K562 (cell line): ENCODE measurements at regions of chr12 and their contacts with region 1.

Region 1: GRCh38 chr12:69585189-69586062 is at the start of gene CCT2:
- DNase-seq: peak; percentile 94 to 98 (median 96)
- ATAC-seq: peak; percentile 96
- H3K4me3 ChIP-seq: peak within 1 kb of the TSS; percentile 70
- H3K27ac ChIP-seq: peak within 1 kb of the TSS; percentile 81
- H3K4me1 ChIP-seq: peaks cover 2 to 4% of the 10 kb centered on the region in 2 experiments; a peak in 2 of 5 replicates
- H3K27me3 ChIP-seq: no peaks in the 10 kb centered on the region
- CTCF ChIP-seq: peak; percentile 38 to 60 (median 49); a peak in 5 of 6 replicates
- EP300 ChIP-seq: peak; percentile 35; the same call in 1 of the 2 replicates
- POLR2A ChIP-seq: peak; percentile 99
- RAD21 ChIP-seq: 0 out of 4 replicates have a peak, but pooled peaks of 1 of the 2 experiments have one; percentile 37
- polyA plus RNA-seq, gene CCT2: 542 to 680 TPM

Region 2: GRCh38 chr12:69359531-69360347 is 225.7 kb before region 1 on chr12 and contains the start of gene YEATS4:
- CTCF ChIA-PET with region 1: no interaction called
- POLR2A ChIA-PET with region 1: interaction called, 3 read pairs
- in situ Hi-C with region 1: no loop called
- intact Hi-C with region 1: loop called (anchors 1 kb)
- DNase-seq: peak; percentile 86 to 95 (median 90)
- ATAC-seq: peak; percentile 94
- H3K4me3 ChIP-seq: peak within 1 kb of the TSS; percentile 52
- H3K27ac ChIP-seq: peak within 1 kb of the TSS; percentile 95
- H3K4me1 ChIP-seq: peaks cover 11 to 14% of the 10 kb centered on the region in 2 experiments; a peak in 4 of 5 replicates
- H3K27me3 ChIP-seq: no peaks in the 10 kb centered on the region
- CTCF ChIP-seq: no peak
- EP300 ChIP-seq: peak; percentile 34; the same call in 1 of the 2 replicates
- POLR2A ChIP-seq: peak; percentile 95
- RAD21 ChIP-seq: no peak
- polyA plus RNA-seq, gene YEATS4: 25.9 to 26.3 TPM

Region 3: GRCh38 chr12:69623970-69624369 is 38.5 kb after region 1 on chr12:
- CTCF ChIA-PET with region 1: no interaction called
- POLR2A ChIA-PET with region 1: interaction called, 3 read pairs
- in situ Hi-C with region 1: no loop called
- intact Hi-C with region 1: loop called (anchors 5 kb)
- DNase-seq: peak; percentile 71 to 99 (median 82)
- ATAC-seq: peak; percentile 96
- H3K4me3 ChIP-seq: no peak overlapping the region
- H3K27ac ChIP-seq: peak overlapping the region; percentile 52
- H3K4me1 ChIP-seq: peaks cover 16 to 18% of the 10 kb centered on the region in 2 experiments
- H3K27me3 ChIP-seq: 0 out of 5 replicates have a peak, but pooled peaks cover 0 to 6% of the 10 kb centered on the region in 2 experiments
- CTCF ChIP-seq: no peak
- EP300 ChIP-seq: peak; percentile 95
- POLR2A ChIP-seq: no peak
- RAD21 ChIP-seq: peak in 1 of 2 experiments; percentile 12; a peak in 2 of 4 replicates

Region 4: GRCh38 chr12:69639400-69640016 is 54.1 kb after region 1 on chr12:
- CTCF ChIA-PET with region 1: no interaction called
- POLR2A ChIA-PET with region 1: no interaction called
- in situ Hi-C with region 1: no loop called
- intact Hi-C with region 1: loop called (anchors 1 kb)
- DNase-seq: peak; percentile 78 to 88 (median 82)
- ATAC-seq: peak; percentile 95
- H3K4me3 ChIP-seq: no peak overlapping the region
- H3K27ac ChIP-seq: no peak overlapping the region
- H3K4me1 ChIP-seq: peaks cover 0 to 4% of the 10 kb centered on the region in 2 experiments; a peak in 3 of 5 replicates
- H3K27me3 ChIP-seq: no peaks in the 10 kb centered on the region
- CTCF ChIP-seq: peak; percentile 85 to 93 (median 88)
- EP300 ChIP-seq: no peak
- POLR2A ChIP-seq: no peak
- RAD21 ChIP-seq: peak; percentile 79 to 81

Region 5: DNA sequence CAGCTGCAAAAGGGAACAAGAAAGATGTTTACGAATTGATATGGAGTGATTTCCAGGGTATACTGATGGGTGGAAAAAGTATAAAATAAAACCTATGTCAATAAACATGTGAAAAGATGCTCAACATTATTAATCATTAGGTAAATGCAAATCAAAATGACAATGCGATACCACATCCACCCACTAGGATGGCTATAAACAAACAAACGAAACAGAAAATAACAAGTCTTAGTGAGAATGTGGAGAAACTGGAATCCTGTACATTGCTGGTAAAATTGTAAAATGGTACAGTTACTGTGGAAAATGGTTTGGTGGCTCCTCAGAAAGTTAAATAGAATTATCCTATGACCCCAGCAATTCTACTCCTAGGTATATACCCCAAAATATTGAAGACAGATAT is 123.2 kb after region 1 on chr12:
- CTCF ChIA-PET with region 1: no interaction called
- POLR2A ChIA-PET with region 1: no interaction called
- in situ Hi-C with region 1: no loop called
- intact Hi-C with region 1: no loop called
- DNase-seq: no peak
- ATAC-seq: no peak
- H3K4me3 ChIP-seq: no peak overlapping the region
- H3K27ac ChIP-seq: no peak overlapping the region
- H3K4me1 ChIP-seq: no peaks in the 10 kb centered on the region
- H3K27me3 ChIP-seq: no peaks in the 10 kb centered on the region; a peak in 3 of 5 replicates
- CTCF ChIP-seq: no peak
- EP300 ChIP-seq: no peak
- POLR2A ChIP-seq: no peak
- RAD21 ChIP-seq: no peak